Activated CD4-positive, alpha-beta T cell treated with anti-CD3 and anti-CD28 coated beads for 36 hours (primary cell): ENCODE measurements at regions of chr6 and their contacts with region 1.

Region 1: GRCh38 chr6:108848116-108848868 is at the start of gene ARMC2:
- DNase-seq: peak; percentile 91
- ATAC-seq: peak; percentile 93
- H3K4me3 Mint-ChIP-seq: peak within 1 kb of the TSS; percentile 78
- H3K27ac Mint-ChIP-seq: peak within 1 kb of the TSS; percentile 74
- H3K4me1 Mint-ChIP-seq: peaks cover 23% of the 10 kb centered on the region
- H3K27me3 Mint-ChIP-seq: no peaks in the 10 kb centered on the region
- total RNA-seq, gene ARMC2: 3.9 to 5.2 TPM

Region 2: DNA sequence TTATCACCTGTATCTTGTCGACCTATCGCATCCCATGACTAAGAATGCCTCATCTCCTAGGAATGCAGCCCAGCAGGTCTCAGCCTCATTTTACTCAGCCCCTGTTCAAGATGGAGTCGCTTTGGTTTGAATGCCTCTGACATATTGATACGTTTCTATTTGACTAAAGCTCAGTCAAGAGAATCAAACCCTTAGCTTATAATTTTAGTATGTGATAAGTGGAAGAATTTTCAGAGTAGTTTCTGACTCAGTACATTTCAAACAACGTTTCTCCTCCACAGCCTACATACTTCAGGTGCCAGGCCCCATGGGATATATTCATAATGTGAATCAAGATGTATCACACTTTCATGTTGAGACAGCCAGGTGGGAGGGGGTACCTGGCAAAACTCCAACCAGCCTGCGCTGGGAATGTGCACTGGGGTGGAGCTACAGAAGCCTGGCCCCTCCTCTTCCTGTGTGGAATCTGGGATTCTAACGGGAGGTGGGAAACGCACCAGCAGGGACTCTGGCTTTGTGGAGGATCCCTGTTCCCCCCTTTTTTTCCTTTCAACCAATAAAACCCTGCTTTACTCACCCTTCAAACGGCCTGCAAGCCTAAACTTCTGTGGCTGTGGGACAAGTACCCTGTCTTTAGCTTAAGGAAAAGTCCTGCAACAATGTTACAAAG is 883.5 kb before region 1 on chr6:
- CTCF ChIA-PET with region 1: no interaction called
- POLR2A ChIA-PET with region 1: no interaction called
- intact Hi-C with region 1: loop called in 1 of 2 experiments (anchors 10 kb)
- DNase-seq: peak; percentile 90
- ATAC-seq: peak; percentile 96
- H3K4me3 Mint-ChIP-seq: no peak overlapping the region
- H3K27ac Mint-ChIP-seq: peak overlapping the region; percentile 88
- H3K4me1 Mint-ChIP-seq: peaks cover 25% of the 10 kb centered on the region
- H3K27me3 Mint-ChIP-seq: peaks cover 2% of the 10 kb centered on the region

Region 3: DNA sequence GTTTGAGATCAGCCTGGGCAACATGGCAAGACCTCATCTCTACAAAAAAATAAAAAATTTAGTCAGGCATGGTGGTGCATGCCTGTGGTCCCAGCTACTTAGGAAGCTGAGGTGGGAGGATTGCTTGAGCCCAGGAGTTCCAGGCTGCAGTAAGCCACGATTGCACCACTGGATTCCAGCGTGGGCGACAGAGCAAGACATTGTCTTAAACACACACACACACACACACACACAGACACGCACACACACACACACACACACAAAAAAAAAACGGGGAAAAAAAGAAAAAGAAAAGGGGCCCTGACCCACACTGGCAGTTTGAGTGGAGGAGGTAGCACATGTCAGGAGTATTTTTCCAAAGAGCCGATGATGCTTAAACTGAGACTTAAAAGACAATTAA is 431.3 kb before region 1 on chr6:
- CTCF ChIA-PET with region 1: no interaction called
- POLR2A ChIA-PET with region 1: no interaction called
- intact Hi-C with region 1: no loop called
- DNase-seq: no peak
- ATAC-seq: no peak
- H3K4me3 Mint-ChIP-seq: no peak overlapping the region
- H3K27ac Mint-ChIP-seq: no peak overlapping the region
- H3K4me1 Mint-ChIP-seq: no peaks in the 10 kb centered on the region
- H3K27me3 Mint-ChIP-seq: peaks cover 2% of the 10 kb centered on the region

Region 4: GRCh38 chr6:108541838-108542759 is 306.2 kb before region 1 on chr6:
- CTCF ChIA-PET with region 1: interaction called, 10 read pairs
- POLR2A ChIA-PET with region 1: no interaction called
- intact Hi-C with region 1: no loop called
- DNase-seq: peak; percentile 81
- ATAC-seq: peak; percentile 79
- H3K4me3 Mint-ChIP-seq: no peak overlapping the region
- H3K27ac Mint-ChIP-seq: no peak overlapping the region
- H3K4me1 Mint-ChIP-seq: peaks cover 7% of the 10 kb centered on the region
- H3K27me3 Mint-ChIP-seq: no peaks in the 10 kb centered on the region

Region 5: GRCh38 chr6:108835218-108835850 is 13.0 kb before region 1 on chr6:
- CTCF ChIA-PET with region 1: interaction called, 21 read pairs
- POLR2A ChIA-PET with region 1: no interaction called
- intact Hi-C with region 1: no loop called
- DNase-seq: peak; percentile 93
- ATAC-seq: peak; percentile 96
- H3K4me3 Mint-ChIP-seq: no peak overlapping the region
- H3K27ac Mint-ChIP-seq: no peak overlapping the region
- H3K4me1 Mint-ChIP-seq: peaks cover 20% of the 10 kb centered on the region
- H3K27me3 Mint-ChIP-seq: no peaks in the 10 kb centered on the region

Region 6: GRCh38 chr6:108862479-108863191 is 14.3 kb after region 1 on chr6:
- CTCF ChIA-PET with region 1: interaction called, 11 read pairs
- POLR2A ChIA-PET with region 1: no interaction called
- intact Hi-C with region 1: no loop called
- DNase-seq: no peak
- ATAC-seq: no peak
- H3K4me3 Mint-ChIP-seq: no peak overlapping the region
- H3K27ac Mint-ChIP-seq: no peak overlapping the region
- H3K4me1 Mint-ChIP-seq: peaks cover 10% of the 10 kb centered on the region
- H3K27me3 Mint-ChIP-seq: no peaks in the 10 kb centered on the region

Region 7: GRCh38 chr6:108896111-108896661 is 47.9 kb after region 1 on chr6:
- CTCF ChIA-PET with region 1: interaction called, 18 read pairs
- POLR2A ChIA-PET with region 1: interaction called, 3 read pairs
- intact Hi-C with region 1: no loop called
- DNase-seq: no peak
- ATAC-seq: peak; percentile 42
- H3K4me3 Mint-ChIP-seq: no peak overlapping the region
- H3K27ac Mint-ChIP-seq: no peak overlapping the region
- H3K4me1 Mint-ChIP-seq: peaks cover 13% of the 10 kb centered on the region
- H3K27me3 Mint-ChIP-seq: no peaks in the 10 kb centered on the region